Posterior vena cava (tissue), 2 donors: ENCODE measurements at regions of chr11 and their contacts with region 1.

Region 1: DNA sequence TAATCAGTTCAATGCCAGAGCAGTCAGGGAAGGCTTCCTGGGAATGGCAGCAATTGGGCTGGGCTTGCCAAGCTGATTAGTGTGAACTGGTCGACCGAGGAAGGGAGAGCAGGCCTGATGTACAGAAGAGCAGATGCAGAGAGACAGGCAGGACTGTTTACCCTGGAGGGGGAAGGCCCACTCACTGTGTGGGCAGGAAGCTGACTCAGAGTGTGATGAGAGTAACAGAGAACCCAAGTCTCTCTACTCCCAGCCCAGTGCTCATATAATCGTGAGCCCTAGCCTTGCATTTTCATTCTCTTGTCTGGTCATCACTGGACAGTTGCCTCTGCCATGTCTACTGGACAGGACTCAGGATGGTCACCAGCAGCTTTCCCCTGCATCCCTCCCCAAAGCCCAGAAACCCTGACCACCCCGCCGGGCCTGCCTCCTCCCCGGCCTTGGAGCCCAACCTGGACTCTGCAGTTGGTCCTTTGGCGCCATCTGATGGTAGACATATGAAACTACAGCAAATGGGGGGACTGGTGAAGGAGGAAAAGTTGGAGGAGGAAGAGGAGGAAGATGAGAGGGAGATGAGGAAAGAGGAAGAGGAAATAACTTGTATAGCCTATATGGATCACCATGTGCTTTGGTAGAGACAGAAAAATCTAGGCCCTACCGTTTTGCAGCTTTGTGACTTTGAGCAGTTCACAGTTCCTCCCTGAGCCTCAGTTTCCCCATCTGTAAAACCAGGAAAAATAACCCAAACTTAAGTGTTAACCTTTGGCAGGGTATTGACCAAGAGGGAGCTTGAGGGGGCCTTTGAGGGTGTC is 43.4 kb upstream of the PRDM11 start:
- DNase-seq: peak; percentile 87

Region 2: GRCh38 chr11:43643898-43644620 is 1459.0 kb before region 1 on chr11:
- intact Hi-C with region 1: no loop called
- DNase-seq: peak; percentile 96

Region 3: DNA sequence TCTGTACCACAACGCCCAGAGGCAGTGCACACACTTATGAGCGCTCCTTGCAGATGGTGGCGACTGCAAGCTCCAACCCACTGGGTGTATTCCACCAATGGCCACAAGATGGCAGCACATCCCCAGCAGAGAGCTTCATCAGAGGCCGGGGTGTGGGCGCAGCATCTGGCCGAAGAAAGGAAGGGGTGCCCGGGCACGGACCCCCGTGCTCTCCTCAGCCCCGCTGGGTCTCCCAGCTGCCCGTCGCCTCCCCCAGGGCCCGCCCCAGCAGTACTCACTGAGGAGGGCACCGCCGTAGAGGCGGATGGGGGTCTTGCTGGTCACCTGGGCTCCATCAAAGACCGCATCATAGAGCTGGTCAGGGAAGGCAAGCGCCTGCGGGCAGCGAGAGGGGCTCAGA is 166.5 kb before region 1 on chr11:
- intact Hi-C with region 1: loop called (anchors 2 kb)
- DNase-seq: peak; percentile 94

Region 4: GRCh38 chr11:45053736-45054446 is 49.1 kb before region 1 on chr11:
- intact Hi-C with region 1: loop called in 1 of 2 experiments (anchors 1 kb)
- DNase-seq: peak; percentile 52

Region 5: DNA sequence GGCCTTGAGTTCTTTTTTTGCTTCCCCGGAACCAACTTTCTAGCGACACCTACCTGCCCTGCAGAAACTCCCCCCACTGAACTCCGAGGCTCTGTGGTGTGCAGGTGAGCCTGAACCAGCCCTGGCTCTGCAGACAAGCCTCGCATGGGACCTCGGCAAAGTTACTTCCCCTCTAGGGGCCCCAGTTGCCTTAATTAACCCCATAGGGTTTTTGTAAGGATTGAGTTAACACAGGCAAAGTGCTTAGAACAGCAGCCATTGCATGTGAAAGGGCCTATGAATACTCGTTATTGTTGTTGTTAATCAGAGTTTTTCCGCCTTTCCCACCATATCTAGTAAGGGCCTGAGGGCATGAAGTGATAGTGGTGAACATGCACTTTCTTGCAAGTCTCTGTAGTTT is 195.7 kb after region 1 on chr11:
- intact Hi-C with region 1: loop called in 1 of 2 experiments (anchors 5 kb)
- DNase-seq: no peak

Region 6: GRCh38 chr11:45332276-45332934 is 229.4 kb after region 1 on chr11:
- intact Hi-C with region 1: loop called in 1 of 2 experiments (anchors 5 kb)
- DNase-seq: no peak